SK-N-SH (cell line): ENCODE measurements at regions of chr17 and their contacts with region 1.

Region 1: GRCh38 chr17:40362696-40363110 is 1.8 kb downstream of the GJD3 start:
- DNase-seq: peak; percentile 93
- H3K4me3 ChIP-seq: peak overlapping the region; percentile 57 to 62
- H3K27ac ChIP-seq: no peak overlapping the region
- H3K4me1 ChIP-seq: peaks cover 6 to 16% of the 10 kb centered on the region in 2 experiments; a peak in 2 of 4 replicates
- H3K27me3 ChIP-seq: no peaks in the 10 kb centered on the region
- CTCF ChIP-seq: peak; percentile 72
- EP300 ChIP-seq: no peak
- RAD21 ChIP-seq: peak; percentile 68

Region 2: GRCh38 chr17:40168262-40168832 is 194.4 kb before region 1 on chr17:
- CTCF ChIA-PET with region 1: no interaction called
- POLR2A ChIA-PET with region 1: no interaction called
- DNase-seq: peak; percentile 65
- H3K4me3 ChIP-seq: peak overlapping the region in 1 of 2 experiments; percentile 36; a peak in 1 of 4 replicates
- H3K27ac ChIP-seq: peak overlapping the region; percentile 37; a peak in 2 of 4 replicates
- H3K4me1 ChIP-seq: peaks cover 0 to 3% of the 10 kb centered on the region in 2 experiments; a peak in 2 of 4 replicates
- H3K27me3 ChIP-seq: no peaks in the 10 kb centered on the region
- CTCF ChIP-seq: peak; percentile 83
- EP300 ChIP-seq: no peak
- RAD21 ChIP-seq: peak; percentile 75

Region 3: DNA sequence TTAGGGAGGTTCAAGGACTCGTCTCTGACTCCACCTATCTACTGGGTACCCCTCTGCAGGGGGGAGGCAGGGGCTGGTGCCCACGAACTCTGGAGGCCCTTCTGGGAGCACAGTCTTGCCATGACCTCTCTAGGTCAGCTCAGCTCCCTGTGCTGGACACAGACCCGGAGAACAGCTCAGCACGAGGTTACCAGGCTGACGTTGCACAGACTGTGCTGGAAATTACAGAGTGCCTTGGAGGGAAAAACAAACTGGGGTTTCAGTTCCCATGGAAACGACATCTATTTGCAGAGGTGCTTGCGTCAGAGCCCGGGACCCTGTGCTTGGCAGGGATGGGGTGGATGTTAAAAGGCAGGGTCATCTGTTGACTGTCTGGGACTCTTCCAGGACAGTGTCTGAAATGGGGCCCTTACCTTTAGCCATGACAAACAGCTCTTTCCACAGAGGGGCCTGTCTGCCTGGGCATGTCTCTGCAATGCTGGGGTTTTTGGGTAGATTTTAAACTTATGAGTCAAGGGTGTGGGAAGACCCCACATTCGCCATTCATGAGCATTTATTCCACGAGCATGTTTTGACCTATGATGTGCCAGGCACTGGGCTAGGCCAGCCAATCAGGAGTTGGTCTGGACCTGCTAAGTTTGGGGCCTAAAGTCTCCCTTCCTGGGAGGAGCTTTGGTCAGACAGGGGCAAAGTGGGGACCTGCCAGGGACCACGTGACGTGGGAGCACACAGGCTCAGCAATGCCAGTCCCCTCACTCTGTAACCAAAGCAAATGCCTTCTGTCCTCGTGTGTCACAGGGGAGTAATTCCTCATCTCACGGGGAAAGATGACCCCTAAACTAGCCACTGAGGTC is 180.1 kb after region 1 on chr17:
- CTCF ChIA-PET with region 1: interaction called, 261 read pairs
- POLR2A ChIA-PET with region 1: no interaction called
- DNase-seq: peak; percentile 88
- H3K4me3 ChIP-seq: no peak overlapping the region
- H3K27ac ChIP-seq: peak overlapping the region; percentile 63 to 96
- H3K4me1 ChIP-seq: peaks cover 8 to 79% of the 10 kb centered on the region in 2 experiments; a peak in 3 of 4 replicates
- H3K27me3 ChIP-seq: no peaks in the 10 kb centered on the region
- CTCF ChIP-seq: no peak
- EP300 ChIP-seq: peak in 1 of 2 experiments; percentile 91; a peak in 2 of 4 replicates
- RAD21 ChIP-seq: no peak

Region 4: DNA sequence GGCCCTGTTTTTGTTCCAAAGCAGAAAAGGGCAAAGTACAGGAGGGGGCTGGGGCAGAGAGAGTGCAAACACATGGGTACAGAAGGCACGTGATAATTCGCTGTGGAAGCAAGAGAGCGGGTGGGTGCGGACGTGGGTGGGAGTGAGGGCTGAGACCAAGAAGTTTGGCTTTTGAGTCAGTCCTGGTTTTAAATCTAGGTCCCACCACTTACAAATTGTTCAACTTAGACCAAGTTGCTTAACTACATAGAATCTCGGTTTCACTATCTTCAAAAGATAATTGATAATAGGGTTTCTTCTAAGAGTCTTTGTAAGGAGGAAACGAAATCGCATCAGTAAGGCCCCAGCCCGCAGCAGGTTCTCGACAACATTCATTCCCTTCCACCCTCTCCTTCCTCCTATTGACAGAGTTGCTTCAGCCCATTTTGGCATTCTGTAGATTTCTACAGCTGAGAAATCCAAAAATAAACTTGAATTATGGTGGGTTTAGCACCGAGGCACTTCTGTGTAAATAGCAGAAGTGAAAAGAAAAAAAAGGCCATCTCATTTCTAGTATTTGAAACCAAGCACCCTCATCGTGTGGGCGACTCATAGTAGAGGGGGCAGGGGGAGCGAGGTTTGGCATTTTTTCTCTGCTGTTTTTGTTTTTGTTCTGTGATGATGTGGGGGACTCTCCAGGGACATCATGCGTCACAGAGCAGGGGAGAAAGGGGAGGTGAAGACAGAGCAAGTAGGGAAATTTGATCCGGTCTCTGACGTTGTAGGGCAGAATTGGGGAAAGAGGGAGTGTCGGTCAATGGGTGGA is 236.2 kb after region 1 on chr17:
- CTCF ChIA-PET with region 1: no interaction called
- POLR2A ChIA-PET with region 1: no interaction called
- DNase-seq: no peak
- H3K4me3 ChIP-seq: no peak overlapping the region
- H3K27ac ChIP-seq: no peak overlapping the region
- H3K4me1 ChIP-seq: no peaks in the 10 kb centered on the region
- H3K27me3 ChIP-seq: peaks cover 13% of the 10 kb centered on the region; the same call in 1 of the 2 replicates
- CTCF ChIP-seq: no peak
- EP300 ChIP-seq: no peak
- RAD21 ChIP-seq: no peak